Activated CD4-positive, alpha-beta memory T cell treated with anti-CD3 and anti-CD28 coated beads for 36 hours (primary cell): ENCODE measurements at regions of chrX and their contacts with region 1.

Region 1: GRCh38 chrX:51420610-51421009 is 75.8 kb downstream of the NUDT11 start:
- DNase-seq: no peak
- H3K4me3 Mint-ChIP-seq: no peak overlapping the region
- H3K27ac Mint-ChIP-seq: no peak overlapping the region
- H3K4me1 Mint-ChIP-seq: peaks cover 10% of the 10 kb centered on the region
- H3K27me3 Mint-ChIP-seq: no peaks in the 10 kb centered on the region

Region 2: DNA sequence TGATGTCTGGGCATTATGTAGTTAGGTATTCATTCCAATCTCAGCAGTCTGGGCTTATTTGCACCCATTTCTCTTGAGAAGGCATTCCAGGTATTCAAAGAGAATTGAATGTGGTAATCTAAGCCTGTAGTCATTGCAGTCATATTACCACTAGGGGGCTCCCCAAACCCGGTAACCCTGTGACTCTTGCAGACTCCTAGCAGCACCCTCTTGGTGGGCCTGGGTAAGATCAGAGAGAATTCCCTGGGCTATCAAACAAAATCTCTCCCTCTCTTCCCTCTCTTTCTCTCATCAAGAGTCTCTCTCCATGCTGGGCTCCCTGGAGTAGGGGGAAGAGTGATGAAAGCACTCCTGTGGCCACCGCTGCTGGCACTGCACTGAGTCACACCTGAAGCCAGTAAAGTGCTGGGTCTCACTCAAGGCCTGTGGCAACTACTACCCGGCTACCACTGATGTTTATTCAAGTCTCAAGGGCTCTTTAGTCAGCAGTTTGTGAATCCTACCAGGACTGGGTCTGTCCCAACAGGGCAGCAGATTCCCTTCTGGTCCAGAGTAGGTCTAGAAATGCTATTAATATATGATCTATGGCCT is 275.7 kb before region 1 on chrX:
- CTCF ChIA-PET with region 1: interaction called, 10 read pairs
- POLR2A ChIA-PET with region 1: no interaction called
- intact Hi-C with region 1: no loop called
- DNase-seq: peak; percentile 27
- H3K4me3 Mint-ChIP-seq: no peak overlapping the region
- H3K27ac Mint-ChIP-seq: no peak overlapping the region
- H3K4me1 Mint-ChIP-seq: no peaks in the 10 kb centered on the region
- H3K27me3 Mint-ChIP-seq: peaks cover 15% of the 10 kb centered on the region

Region 3: DNA sequence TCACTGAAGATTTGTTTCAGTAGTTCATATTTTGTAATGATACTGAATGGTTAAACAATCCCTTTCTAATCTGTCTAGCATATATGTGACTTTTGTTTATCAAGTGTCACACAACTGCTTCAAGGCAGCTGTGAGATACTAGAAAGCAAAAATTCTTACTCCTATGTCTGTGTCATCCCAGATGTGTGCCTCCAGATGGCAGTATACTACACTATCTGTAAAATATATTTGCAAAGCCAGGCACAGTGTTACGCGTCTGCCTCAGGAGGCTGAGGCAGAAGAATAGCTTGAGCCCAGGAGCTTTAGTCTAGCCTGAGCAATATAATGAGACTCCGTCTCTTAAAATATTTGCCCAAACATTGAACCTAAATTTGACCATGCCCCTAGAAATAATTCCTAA is 84.0 kb before region 1 on chrX:
- CTCF ChIA-PET with region 1: interaction called, 75 read pairs
- POLR2A ChIA-PET with region 1: no interaction called
- intact Hi-C with region 1: loop called (anchors 1 kb)
- DNase-seq: peak; percentile 22
- H3K4me3 Mint-ChIP-seq: no peak overlapping the region
- H3K27ac Mint-ChIP-seq: no peak overlapping the region
- H3K4me1 Mint-ChIP-seq: peaks cover 5% of the 10 kb centered on the region
- H3K27me3 Mint-ChIP-seq: peaks cover 3% of the 10 kb centered on the region

Region 4: DNA sequence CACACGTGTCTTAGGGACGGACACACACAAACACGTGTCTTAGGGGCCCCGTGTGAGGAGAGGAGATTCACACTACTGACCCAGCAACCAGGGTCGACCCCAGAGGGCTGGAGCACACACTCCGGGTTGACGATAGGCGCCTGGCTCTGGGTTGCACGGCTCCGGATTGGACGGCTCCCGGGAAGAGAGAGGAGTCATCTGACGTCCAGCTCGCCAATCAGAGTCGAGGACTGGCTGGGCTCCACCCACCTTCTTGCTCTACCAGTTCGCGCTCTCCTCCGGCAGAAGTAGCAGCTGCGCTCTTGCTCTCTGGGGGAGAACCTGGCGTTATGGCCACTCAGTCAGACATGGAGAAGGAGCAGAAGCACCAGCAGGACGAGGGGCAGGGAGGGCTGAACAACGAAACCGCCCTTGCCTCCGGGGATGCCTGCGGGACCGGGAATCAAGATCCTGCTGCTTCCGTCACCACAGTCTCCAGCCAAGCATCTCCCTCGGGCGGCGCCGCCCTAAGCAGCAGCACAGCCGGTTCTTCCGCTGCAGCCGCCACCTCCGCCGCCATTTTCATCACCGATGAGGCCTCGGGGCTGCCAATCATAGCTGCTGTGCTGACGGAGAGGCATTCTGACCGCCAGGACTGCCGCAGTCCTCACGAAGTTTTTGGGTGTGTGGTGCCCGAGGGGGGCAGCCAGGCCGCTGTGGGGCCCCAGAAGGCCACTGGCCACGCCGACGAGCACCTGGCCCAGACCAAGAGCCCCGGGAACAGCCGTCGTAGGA is 13.7 kb before region 1 on chrX:
- CTCF ChIA-PET with region 1: interaction called, 10 read pairs
- POLR2A ChIA-PET with region 1: no interaction called
- intact Hi-C with region 1: no loop called
- DNase-seq: no peak
- H3K4me3 Mint-ChIP-seq: no peak overlapping the region
- H3K27ac Mint-ChIP-seq: no peak overlapping the region
- H3K4me1 Mint-ChIP-seq: no peaks in the 10 kb centered on the region
- H3K27me3 Mint-ChIP-seq: no peaks in the 10 kb centered on the region

Region 5: DNA sequence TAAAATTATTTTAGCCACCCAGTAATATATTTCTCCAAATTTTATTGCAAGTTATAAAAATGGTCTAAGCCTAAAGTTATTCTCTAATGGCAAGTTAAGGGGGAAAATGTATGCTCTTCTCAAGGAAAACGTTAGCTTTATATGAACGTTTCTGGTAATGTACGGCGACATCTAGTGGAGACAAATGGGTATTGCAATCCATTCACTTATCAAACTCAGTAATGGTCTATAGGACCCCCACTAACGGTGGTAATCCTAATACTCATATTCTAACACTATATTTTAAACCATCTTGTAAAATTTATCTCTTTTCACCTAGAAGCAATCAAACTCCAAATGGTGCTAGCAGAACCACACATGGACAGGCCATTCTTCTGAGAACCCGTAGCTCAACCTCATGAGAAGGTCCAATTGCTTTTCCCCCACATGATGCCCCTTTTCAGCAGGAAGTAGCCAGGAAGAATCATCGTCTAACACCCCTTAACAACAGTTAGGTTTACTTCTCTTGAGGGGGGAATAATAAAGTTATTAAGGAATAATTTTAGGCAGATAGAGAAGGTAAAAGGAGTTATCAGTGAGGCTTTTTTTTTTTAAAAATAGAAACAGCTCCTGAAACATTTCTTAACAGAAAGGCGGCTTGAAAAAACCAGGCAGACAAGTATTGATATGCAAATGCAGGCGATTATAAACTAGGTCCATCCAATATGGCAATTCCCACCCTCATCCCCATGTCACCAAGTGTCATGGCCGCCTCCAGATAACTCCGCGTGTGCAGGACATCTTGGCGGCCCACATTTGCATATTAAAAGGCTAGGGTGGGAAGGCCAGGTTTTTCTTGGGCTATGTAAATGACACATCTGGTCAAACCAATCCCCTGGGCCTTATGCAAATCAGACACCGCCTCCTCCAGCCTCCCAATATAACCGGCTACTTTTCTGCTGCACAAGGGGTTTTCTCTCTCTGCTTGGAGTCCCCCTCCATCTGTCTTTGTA is 40.7 kb after region 1 on chrX:
- CTCF ChIA-PET with region 1: interaction called, 10 read pairs
- POLR2A ChIA-PET with region 1: no interaction called
- intact Hi-C with region 1: no loop called
- DNase-seq: no peak
- H3K4me3 Mint-ChIP-seq: no peak overlapping the region
- H3K27ac Mint-ChIP-seq: no peak overlapping the region
- H3K4me1 Mint-ChIP-seq: no peaks in the 10 kb centered on the region
- H3K27me3 Mint-ChIP-seq: no peaks in the 10 kb centered on the region

Region 6: GRCh38 chrX:51568586-51568985 is 148.0 kb after region 1 on chrX:
- CTCF ChIA-PET with region 1: no interaction called
- POLR2A ChIA-PET with region 1: no interaction called
- intact Hi-C with region 1: no loop called
- DNase-seq: no peak
- H3K4me3 Mint-ChIP-seq: no peak overlapping the region
- H3K27ac Mint-ChIP-seq: no peak overlapping the region
- H3K4me1 Mint-ChIP-seq: no peaks in the 10 kb centered on the region
- H3K27me3 Mint-ChIP-seq: no peaks in the 10 kb centered on the region